ENCODE measurements at regions of chr1 and their contacts with region 1.

Region 1: DNA sequence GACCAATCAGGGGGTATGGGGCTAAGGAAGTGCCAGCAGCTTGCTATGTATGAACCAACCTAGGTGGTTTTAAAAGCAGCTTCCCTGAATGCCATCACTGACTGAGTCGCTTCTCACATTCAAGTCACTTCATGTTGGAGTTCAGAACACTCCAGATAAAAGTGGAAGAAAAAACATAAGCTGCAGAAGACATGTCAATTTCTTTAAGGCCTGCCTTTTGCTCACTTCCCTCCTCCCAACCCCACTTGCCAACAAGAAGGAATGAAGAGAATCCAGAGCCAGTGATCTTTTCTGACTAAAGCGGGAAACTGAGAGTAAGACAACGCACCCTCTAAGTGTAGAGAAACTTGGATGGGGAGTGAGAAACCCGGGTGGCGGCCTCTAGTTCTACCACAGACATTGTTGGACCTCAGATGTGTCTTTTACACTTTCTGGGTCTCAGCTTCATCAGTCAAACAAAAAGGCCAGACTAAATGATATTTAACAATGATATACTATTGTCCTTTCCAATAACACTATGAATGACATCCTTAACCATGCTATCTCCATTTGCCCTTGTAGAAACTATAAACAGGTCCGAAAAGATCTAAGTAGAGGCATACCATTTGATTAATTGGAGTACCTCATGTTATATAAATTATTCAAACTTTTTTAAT is 54.1 kb downstream of the LUZP1 start:
- DNase-seq: no peak
- ATAC-seq: no peak
- H3K4me3 Mint-ChIP-seq: no peak overlapping the region
- H3K27ac Mint-ChIP-seq: peak overlapping the region; percentile 72
- H3K4me1 Mint-ChIP-seq: peaks cover 58% of the 10 kb centered on the region
- H3K27me3 Mint-ChIP-seq: no peaks in the 10 kb centered on the region
- CTCF ChIP-seq: no peak

Region 2: GRCh38 chr1:23019094-23019862 is 95.3 kb before region 1 on chr1 and contains the start of gene KDM1A:
- CTCF ChIA-PET with region 1: no interaction called
- POLR2A ChIA-PET with region 1: no interaction called
- intact Hi-C with region 1: loop called (anchors 1 kb)
- DNase-seq: peak; percentile 96
- ATAC-seq: peak; percentile 98
- H3K4me3 Mint-ChIP-seq: peak within 1 kb of the TSS; percentile 93
- H3K27ac Mint-ChIP-seq: peak within 1 kb of the TSS; percentile 84
- H3K4me1 Mint-ChIP-seq: peaks cover 38% of the 10 kb centered on the region
- H3K27me3 Mint-ChIP-seq: no peaks in the 10 kb centered on the region
- CTCF ChIP-seq: no peak
- total RNA-seq, gene KDM1A: 40.7 and 41.5 TPM in 2 replicates

Region 3: DNA sequence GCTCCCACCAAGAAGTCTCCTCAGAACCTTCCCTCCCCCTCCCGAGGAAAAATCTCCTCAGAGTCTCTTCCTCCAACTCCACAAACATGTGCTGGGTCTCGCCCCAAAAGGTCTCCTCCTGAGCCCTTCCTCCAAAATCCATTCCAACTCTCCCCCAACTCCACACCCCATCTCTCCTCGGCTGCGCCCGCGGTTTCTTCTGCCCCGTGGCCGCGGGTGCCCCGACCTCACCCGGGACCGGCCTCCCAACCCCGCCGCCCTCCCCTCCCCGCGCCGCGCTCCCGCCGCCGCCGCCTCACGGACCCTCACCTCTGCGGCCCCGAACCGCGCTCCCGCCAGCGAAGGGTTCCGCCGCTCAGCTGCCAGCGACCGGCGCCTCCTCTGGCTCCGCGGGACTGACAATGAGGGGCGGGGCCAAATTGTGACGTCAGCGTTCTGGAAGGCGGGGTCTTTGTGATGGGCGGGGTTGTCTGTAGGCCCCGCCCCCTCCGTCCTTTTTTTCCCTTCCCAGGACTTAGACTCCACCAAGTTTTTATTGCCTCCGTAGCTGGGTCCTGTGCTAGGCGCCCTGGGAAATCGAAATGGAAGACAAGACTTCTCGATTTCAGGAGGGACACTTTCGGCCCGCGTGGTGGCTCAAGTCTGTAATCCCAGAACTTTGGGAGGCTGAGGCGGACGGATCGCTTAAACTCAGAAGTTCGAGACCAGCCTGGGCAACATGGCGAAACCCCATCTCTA is 54.1 kb after region 1 on chr1 and contains the start of gene LUZP1:
- CTCF ChIA-PET with region 1: no interaction called
- POLR2A ChIA-PET with region 1: interaction called, 5 read pairs
- intact Hi-C with region 1: loop called (anchors 2 kb)
- DNase-seq: peak; percentile 80
- ATAC-seq: peak; percentile 84
- H3K4me3 Mint-ChIP-seq: peak within 1 kb of the TSS; percentile 95
- H3K27ac Mint-ChIP-seq: peak within 1 kb of the TSS; percentile 80
- H3K4me1 Mint-ChIP-seq: peaks cover 23% of the 10 kb centered on the region
- H3K27me3 Mint-ChIP-seq: no peaks in the 10 kb centered on the region
- CTCF ChIP-seq: no peak
- total RNA-seq, gene LUZP1: 10.8 and 13.0 TPM in 2 replicates

Region 4: DNA sequence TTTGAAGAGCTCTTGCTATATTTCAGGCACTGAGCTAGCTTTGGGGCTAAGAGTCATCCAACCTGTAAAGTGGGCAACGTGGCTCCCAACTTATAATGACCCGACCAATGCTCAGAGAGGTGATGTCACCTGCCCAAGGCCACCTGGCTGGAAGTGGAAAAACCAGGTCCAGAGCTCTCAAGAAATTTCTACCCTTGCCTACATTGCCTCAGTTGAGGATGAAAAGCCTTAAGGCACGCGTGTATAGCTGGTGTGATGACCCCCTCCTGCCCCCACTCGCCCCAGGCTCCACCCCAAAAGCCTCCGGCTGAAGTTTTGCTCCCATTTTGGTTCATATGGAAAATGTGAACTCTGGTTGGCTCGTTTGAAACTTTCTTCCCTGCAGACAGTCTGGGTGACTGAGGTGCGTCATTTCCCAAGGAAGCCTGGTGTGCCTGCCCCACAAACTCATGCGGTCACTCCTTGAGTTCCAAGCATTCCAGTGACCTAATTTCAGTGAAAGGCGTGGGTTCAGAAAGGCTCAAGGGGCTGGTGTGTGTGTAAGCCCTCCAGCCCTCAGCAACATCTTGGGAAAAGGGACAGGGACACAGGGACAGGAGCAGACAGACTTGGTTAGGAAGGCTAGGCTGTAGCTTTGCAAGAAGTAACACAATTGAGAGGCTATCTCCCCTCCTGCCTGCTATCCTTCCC is 82.2 kb after region 1 on chr1:
- CTCF ChIA-PET with region 1: no interaction called
- POLR2A ChIA-PET with region 1: interaction called, 18 read pairs
- intact Hi-C with region 1: no loop called
- DNase-seq: no peak
- ATAC-seq: no peak
- H3K4me3 Mint-ChIP-seq: no peak overlapping the region
- H3K27ac Mint-ChIP-seq: no peak overlapping the region
- H3K4me1 Mint-ChIP-seq: no peaks in the 10 kb centered on the region
- H3K27me3 Mint-ChIP-seq: peaks cover 14% of the 10 kb centered on the region
- CTCF ChIP-seq: no peak

Measured in activated B cell treated with CpG ODN at 0.5 μM for 24 hours (primary cell).